ENCODE measurements at regions of chr6 and their contacts with region 1.

Region 1: GRCh38 chr6:107991061-107991460 is 33.1 kb upstream of the SEC63 start:
- DNase-seq: no peak
- H3K4me3 Mint-ChIP-seq: no peak overlapping the region
- H3K27ac Mint-ChIP-seq: no peak overlapping the region
- H3K4me1 Mint-ChIP-seq: no peaks in the 10 kb centered on the region
- H3K27me3 Mint-ChIP-seq: no peaks in the 10 kb centered on the region
- CTCF ChIP-seq: no peak

Region 2: DNA sequence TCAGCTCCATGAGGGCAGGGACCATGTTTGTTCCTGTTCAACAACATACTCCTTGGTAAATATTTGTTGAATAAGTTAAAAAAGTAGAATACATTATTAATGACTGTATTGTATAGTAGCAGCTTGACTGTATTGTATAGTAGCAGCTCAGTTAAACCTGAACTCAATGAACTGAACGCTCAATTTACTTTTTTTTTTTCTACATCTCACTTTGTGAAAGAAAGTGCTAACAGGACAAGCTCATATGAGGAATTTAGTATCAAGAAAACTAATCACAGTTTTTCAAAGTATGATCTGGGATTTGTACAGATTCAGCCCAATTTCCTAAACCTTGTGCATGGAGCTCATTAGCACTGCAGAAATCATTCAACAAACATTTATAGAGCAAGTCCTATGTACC is 136.0 kb after region 1 on chr6:
- CTCF ChIA-PET with region 1: interaction called, 10 read pairs
- intact Hi-C with region 1: no loop called
- DNase-seq: no peak
- H3K4me3 Mint-ChIP-seq: no peak overlapping the region
- H3K27ac Mint-ChIP-seq: no peak overlapping the region
- H3K4me1 Mint-ChIP-seq: peaks cover 8% of the 10 kb centered on the region
- H3K27me3 Mint-ChIP-seq: peaks cover 50% of the 10 kb centered on the region
- CTCF ChIP-seq: no peak

Measured in Calu3 (cell line).